OCI-LY7 (cell line): ENCODE measurements at regions of chr19 and their contacts with region 1.

Region 1: DNA sequence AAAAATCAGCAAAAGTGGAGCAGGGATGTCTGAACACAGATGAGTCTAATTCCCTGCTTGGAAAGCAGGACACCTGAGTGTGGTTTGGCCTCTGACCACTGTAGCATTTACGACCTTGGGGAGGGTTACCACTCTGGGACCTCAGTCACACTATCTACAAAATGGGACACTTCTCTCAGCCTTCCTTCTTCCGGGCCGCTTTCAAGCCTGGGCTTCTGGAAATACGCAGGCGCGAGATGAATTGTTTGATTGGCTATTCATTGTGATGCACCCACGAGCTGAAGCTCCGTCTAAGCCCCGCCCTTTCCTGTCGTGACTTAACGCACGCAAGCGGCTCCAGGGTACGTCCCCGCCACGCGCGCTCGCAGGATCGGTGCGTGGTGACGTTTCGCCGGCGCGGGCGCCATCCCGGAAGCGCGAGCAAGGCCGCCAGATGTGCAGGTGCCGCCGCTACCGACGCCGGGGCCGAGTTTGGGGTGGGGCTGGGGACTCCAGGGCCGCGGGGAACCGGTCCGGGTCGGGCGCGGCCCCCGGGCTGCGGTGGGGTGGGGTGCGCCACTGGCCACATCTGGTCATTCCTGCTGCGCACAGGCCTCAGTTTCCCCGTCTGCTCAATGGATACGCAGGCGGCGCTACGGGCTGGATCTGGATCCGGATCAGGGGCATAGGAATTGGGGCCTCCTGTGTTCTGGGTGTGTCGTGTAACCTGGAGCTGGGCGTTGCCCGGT is at the start of gene KXD1:
- DNase-seq: peak; percentile 100
- H3K4me3 ChIP-seq: peak within 1 kb of the TSS; percentile 95
- H3K27ac ChIP-seq: peak within 1 kb of the TSS; percentile 65
- H3K4me1 ChIP-seq: peaks cover 29% of the 10 kb centered on the region
- CTCF ChIP-seq: no peak
- total RNA-seq, gene KXD1: 96.0 and 99.8 TPM in 2 replicates

Region 2: DNA sequence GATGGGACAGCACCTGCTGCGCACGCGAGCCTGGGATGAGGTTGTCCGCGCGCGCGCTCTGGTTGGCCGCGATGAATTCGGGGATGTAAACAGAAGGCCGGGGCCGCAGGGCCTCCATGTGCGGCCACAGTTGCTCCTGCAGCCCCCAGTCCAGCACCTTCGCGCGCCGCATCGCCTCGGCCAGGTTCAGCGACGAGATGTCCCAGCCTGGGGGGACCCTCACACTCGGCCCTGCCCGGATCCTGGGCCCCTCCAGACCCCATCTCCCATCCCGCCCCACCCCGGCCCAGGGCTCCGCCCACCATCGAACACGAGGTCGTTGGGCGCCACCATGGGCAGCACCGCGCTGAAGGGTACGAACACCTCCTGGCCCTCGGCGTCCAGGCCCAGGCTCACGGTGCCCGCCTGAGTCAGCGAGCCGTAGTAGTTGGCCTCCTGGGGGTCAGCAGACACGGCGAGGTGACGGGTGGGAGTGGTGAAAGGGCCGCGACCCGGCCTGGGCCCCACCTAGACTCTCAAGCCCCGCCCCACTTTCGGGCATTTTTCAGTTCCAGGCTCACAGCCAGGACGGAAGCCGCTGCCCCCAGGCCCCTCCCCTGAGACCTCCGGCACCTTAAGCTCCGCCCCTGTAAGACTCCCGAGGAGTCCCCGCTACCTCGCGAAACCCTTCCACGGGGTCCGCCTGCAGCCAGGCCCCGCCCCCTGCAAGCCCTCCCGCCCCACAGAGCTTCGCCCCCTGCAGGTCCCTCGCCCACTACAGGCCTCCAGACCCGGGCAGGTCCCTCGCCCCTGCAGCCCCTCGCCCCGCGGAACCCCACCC is 120.8 kb before region 1 on chr19:
- CTCF ChIA-PET with region 1: no interaction called
- POLR2A ChIA-PET with region 1: no interaction called
- intact Hi-C with region 1: no loop called
- DNase-seq: peak; percentile 76
- H3K4me3 ChIP-seq: peak overlapping the region; percentile 35
- H3K27ac ChIP-seq: no peak overlapping the region
- H3K4me1 ChIP-seq: peaks cover 20% of the 10 kb centered on the region
- CTCF ChIP-seq: no peak

Region 3: DNA sequence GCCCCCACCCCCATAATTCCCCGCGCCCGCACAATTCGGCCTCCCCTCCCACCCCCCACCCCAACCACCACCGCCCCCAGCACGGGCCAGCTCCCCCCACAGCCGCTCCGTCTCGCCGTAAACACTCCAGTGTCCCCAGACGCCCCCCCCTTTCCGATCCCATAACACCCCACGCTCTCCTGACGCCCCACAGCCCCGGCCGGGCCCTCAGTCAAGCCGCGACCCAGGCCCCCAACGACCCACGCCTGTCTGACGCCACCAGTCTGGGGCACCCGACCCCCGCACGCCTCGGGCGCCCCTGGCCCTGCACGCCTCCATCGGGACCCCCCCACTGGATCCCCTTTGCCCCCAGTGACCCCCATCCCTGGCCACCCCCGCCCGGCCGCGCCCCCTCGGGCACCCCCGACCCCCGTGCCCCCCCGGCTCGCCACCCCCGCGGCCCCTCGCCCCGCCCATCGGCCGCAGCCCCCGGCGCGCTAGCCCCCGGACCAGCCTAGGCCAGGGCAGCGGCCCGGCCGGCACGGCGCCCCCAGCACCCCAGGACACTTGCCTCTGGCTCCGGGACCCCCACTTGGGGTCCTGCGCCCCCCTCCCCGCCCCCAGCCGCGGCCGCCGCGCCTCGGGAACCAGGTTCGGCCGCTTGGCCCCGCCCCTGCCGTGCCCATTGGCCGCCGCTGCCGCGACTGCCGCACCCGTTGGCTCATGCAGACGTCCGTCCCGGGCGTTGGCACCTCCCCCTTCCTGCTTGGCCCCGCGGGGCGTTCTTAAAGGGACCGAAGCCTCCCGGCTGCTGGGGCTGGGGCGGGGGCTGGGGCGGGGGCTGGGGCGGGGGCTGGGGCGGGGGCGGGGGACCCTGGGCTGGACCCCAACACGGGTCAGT is 14.5 kb before region 1 on chr19 and contains the start of gene FKBP8:
- CTCF ChIA-PET with region 1: interaction called, 3 read pairs
- POLR2A ChIA-PET with region 1: interaction called, 16 read pairs
- intact Hi-C with region 1: no loop called
- DNase-seq: peak; percentile 94
- H3K4me3 ChIP-seq: peak within 1 kb of the TSS; percentile 76
- H3K27ac ChIP-seq: peak within 1 kb of the TSS; percentile 54
- H3K4me1 ChIP-seq: peaks cover 19% of the 10 kb centered on the region
- CTCF ChIP-seq: no peak
- total RNA-seq, gene FKBP8: 159 and 200 TPM in 2 replicates

Region 4: GRCh38 chr19:18571564-18572300 is 14.1 kb after region 1 on chr19 and contains the start of gene UBA52:
- CTCF ChIA-PET with region 1: no interaction called
- POLR2A ChIA-PET with region 1: interaction called, 27 read pairs
- intact Hi-C with region 1: loop called (anchors 1 kb)
- DNase-seq: peak; percentile 99
- H3K4me3 ChIP-seq: peak within 1 kb of the TSS; percentile 82
- H3K27ac ChIP-seq: peak within 1 kb of the TSS; percentile 75
- H3K4me1 ChIP-seq: peaks cover 19% of the 10 kb centered on the region
- CTCF ChIP-seq: no peak
- total RNA-seq, gene UBA52: 1,188 and 1,580 TPM in 2 replicates